ENCODE measurements at regions of chr21 and their contacts with region 1.

Region 1: GRCh38 chr21:37220981-37221664 is 46.0 kb downstream of the VPS26C start:
- DNase-seq: peak; percentile 95 to 97 (median 97)
- ATAC-seq: peak; percentile 96 to 98 (median 96)
- H3K4me3 ChIP-seq: peak overlapping the region; percentile 38 to 84 (median 70)
- H3K27ac ChIP-seq: peak overlapping the region; percentile 71 to 94 (median 86)
- H3K4me1 ChIP-seq: peaks cover 0 to 18% (median 10%) of the 10 kb centered on the region in 12 donors
- H3K27me3 ChIP-seq: no peaks in the 10 kb centered on the region
- CTCF ChIP-seq: peak; percentile 2 to 76 (median 50)
- POLR2A ChIP-seq: peak in 1 of 2 donors; percentile 65

Region 2: DNA sequence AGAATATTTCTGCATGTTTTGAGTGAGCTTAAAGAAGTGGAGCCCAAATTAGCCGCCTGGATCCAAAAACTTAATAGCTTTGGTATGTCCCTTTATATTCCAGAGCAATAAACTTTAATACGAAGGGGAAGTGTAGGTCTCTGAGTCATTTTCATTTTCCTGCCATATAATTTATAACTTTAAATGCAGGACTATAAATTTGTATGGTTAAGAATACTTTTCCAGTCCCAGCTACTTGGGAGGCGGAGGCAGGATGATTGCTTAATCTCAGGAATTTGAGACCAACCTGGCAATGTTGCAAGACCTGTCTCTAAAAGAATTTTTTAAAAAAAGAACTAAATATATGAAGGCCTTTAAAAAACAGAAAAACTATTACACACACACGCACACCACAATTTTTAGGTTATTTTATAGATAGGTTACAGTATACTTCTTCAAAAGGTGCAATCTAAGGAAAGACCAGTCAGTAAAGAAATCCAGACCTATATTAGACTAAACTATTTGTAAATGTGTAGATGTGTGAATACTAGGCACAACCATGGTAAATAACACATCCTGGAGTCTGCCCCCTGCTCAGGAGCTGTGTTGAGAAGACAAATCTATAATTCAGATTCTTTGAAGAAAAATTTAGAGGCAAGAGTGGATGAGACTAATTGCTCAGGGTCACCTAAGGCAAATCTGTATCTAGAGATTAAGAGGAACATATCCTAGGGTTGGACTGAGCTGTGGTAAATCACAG is 67.8 kb before region 1 on chr21:
- intact Hi-C with region 1: no loop called
- DNase-seq: no peak
- ATAC-seq: no peak
- H3K4me3 ChIP-seq: no peak overlapping the region
- H3K27ac ChIP-seq: peak overlapping the region in 8 of 12 donors; percentile 24 to 76 (median 47)
- H3K4me1 ChIP-seq: peaks cover 0 to 12% (median 1%) of the 10 kb centered on the region in 12 donors
- H3K27me3 ChIP-seq: no peaks in the 10 kb centered on the region
- CTCF ChIP-seq: no peak
- POLR2A ChIP-seq: no peak

Region 3: DNA sequence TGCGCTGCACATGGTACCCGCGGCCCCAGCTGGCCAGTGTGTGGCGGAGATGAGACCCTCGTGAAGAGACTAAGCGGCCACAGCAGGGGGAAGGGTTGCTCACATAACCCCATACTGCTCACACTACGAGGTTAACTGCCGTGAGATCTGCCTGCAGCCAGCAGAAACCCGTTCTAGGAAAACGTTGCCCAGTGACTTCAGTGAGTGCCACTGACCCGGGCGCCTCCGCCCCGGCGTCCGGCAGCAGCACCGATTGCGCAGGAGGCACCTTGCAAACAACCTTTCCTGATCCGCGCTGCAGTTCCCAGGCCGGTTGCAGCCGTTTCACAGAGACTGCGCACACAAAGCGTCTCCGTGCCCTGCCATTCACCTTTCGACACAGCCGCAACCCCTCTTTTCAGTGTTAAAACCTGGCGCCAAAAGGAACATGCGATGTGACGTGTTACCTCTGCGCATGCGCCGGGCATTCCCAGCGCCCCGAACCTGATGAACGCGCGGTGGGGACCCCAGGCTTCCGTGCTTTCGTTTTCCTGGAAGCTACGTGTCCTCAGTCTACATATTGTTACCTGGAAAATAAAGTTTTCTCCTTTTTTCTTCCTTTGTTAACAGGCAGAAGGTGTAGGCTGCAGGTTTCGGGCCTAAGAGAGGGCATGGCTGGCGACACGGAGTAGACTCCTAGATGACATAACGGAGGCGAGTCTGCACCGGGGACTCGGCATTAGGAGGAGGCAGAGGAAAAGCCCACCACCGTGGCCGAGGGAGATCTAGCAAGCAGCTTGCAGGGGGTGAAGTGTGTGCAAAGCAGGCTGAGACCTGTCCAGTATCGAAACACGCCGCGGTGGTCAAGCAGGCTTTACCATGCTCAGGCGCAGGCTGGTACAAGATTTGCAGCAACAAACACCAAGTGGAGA is 37.1 kb after region 1 on chr21:
- intact Hi-C with region 1: loop called in 2 of 10 experiments (anchors 5 kb)
- DNase-seq: peak; percentile 58 to 73 (median 61)
- ATAC-seq: peak; percentile 53 to 71 (median 62)
- H3K4me3 ChIP-seq: peak overlapping the region; percentile 15 to 68 (median 55)
- H3K27ac ChIP-seq: peak overlapping the region in 11 of 12 donors; percentile 50 to 88 (median 68)
- H3K4me1 ChIP-seq: peaks cover 4 to 43% (median 17%) of the 10 kb centered on the region in 12 donors
- H3K27me3 ChIP-seq: no peaks in the 10 kb centered on the region
- CTCF ChIP-seq: no peak
- POLR2A ChIP-seq: no peak